Activated T-helper 1 cell treated with anti-CD3 and anti-CD28 coated beads, Interleukin-12 subunit alpha, Interleukin-12 subunit beta, Interleukin-2, Interleukin-4 antibody, amounts not matched to agents 30 ng/mL and 10 ng/mL and 1 ng/mL, durations not matched to agents 14 hours and 24 hours and 36 hours (primary cell): ENCODE measurements at regions of chr10 and their contacts with region 1.

Region 1: GRCh38 chr10:3467052-3467951 is 294.7 kb upstream of the PITRM1 start:
- DNase-seq: no peak
- H3K4me3 Mint-ChIP-seq: peak overlapping the region; percentile 62
- H3K27ac Mint-ChIP-seq: peak overlapping the region; percentile 90
- H3K4me1 Mint-ChIP-seq: peaks cover 53% of the 10 kb centered on the region
- H3K27me3 Mint-ChIP-seq: no peaks in the 10 kb centered on the region

Region 2: GRCh38 chr10:3197348-3198003 is 269.8 kb before region 1 on chr10:
- intact Hi-C with region 1: loop called (anchors 2 kb)
- DNase-seq: peak; percentile 76
- H3K4me3 Mint-ChIP-seq: peak overlapping the region; percentile 37
- H3K27ac Mint-ChIP-seq: peak overlapping the region; percentile 57
- H3K4me1 Mint-ChIP-seq: peaks cover 24% of the 10 kb centered on the region
- H3K27me3 Mint-ChIP-seq: peaks cover 82% of the 10 kb centered on the region

Region 3: GRCh38 chr10:3419502-3420495 is 47.5 kb before region 1 on chr10:
- intact Hi-C with region 1: loop called (anchors 2 kb)
- DNase-seq: peak; percentile 14
- H3K4me3 Mint-ChIP-seq: peak overlapping the region; percentile 47
- H3K27ac Mint-ChIP-seq: peak overlapping the region; percentile 48
- H3K4me1 Mint-ChIP-seq: peaks cover 40% of the 10 kb centered on the region
- H3K27me3 Mint-ChIP-seq: peaks cover 18% of the 10 kb centered on the region

Region 4: DNA sequence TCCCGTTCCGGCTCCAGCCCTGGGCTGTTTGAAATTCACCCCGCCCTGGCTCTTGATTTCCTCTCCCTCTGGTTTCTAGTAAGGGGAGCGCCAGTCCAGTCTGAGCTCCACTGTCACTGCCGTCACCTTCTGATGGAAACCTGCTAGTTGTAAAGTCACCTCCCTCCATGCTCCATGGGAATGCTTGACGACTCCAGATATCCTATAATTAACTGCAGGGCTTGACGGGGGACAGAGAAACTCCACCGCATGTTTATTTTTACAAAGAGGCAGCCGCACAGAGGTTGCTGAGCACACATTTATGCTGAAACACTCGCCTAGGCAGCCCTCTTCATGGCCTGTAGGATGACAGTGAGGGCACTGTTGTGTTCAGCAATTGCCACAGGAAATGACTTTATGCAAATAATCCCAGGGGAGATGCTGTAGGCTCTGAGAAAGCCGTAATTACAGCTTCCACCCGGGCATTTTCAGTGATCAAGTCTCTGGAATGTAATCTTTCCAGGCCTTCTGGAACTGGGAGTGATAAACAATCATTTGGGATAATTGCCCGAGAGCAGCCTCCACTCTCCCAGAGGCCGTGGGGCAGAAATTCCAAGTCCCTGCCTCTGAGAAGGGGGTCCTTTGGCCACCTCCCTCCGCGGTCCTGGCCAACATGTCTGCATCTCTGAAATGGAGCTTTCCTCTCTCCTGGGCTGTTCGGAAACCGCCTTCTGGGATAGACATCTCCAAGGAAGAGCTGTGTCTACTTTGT is 17.2 kb after region 1 on chr10:
- intact Hi-C with region 1: no loop called
- DNase-seq: no peak
- H3K4me3 Mint-ChIP-seq: no peak overlapping the region
- H3K27ac Mint-ChIP-seq: no peak overlapping the region
- H3K4me1 Mint-ChIP-seq: peaks cover 25% of the 10 kb centered on the region
- H3K27me3 Mint-ChIP-seq: peaks cover 5% of the 10 kb centered on the region

Region 5: DNA sequence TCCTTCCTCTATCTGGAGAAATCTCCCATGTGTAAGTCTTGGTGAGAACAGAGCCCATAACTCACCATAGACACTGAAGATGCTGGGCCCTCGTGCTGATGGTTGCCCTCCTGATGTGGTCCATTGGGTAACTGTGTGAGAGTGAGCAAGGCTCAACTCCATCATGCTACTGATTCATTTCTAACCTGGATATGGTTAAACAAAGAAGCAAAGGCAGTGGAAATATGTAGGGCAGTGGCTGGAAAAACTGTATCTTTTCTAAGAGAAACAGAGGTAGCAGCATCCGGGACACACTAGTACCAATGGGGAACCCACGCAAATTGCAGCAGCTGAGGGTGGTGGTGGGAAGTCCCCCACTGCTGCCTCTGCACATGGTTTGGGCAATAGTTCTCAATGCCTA is 96.0 kb after region 1 on chr10:
- intact Hi-C with region 1: loop called (anchors 5 kb)
- DNase-seq: no peak
- H3K4me3 Mint-ChIP-seq: no peak overlapping the region
- H3K27ac Mint-ChIP-seq: peak overlapping the region; percentile 49
- H3K4me1 Mint-ChIP-seq: peaks cover 28% of the 10 kb centered on the region
- H3K27me3 Mint-ChIP-seq: peaks cover 7% of the 10 kb centered on the region

Region 6: GRCh38 chr10:3791974-3792633 is 324.8 kb after region 1 on chr10:
- intact Hi-C with region 1: no loop called
- DNase-seq: no peak
- H3K4me3 Mint-ChIP-seq: no peak overlapping the region
- H3K27ac Mint-ChIP-seq: peak overlapping the region; percentile 23
- H3K4me1 Mint-ChIP-seq: peaks cover 23% of the 10 kb centered on the region
- H3K27me3 Mint-ChIP-seq: no peaks in the 10 kb centered on the region

Region 7: DNA sequence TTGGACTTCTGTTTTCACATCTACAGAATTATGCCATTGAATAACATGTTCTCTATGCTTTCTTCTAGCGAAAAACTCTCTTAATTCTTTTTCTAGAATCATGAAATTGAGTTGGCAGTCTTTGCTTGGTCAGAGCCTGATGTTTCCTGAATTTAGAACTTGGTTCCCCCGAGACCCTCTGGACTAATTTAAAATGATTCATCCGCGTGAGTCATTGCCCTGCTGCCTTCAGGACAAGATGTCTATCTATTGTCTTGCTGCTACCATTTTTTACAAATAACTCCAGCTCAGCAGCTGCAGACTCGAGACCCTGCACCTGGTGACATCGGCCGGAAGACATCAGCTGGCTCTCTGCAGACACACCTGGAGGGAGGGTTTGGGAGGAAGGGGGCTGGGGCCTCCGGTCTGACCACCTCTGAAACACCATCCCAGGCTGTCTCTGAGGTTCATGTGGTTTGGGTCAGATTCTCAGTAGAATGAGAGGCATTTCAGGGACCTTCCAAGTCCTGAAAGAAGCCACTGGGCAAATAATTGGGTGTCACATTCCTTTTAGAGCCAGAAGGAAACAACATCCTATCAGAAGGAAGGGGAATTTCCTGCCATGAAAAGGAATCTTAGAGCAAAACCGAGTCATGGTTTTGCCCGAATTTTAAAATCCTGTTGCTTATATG is 338.6 kb after region 1 on chr10:
- intact Hi-C with region 1: loop called (anchors 2 kb)
- DNase-seq: no peak
- H3K4me3 Mint-ChIP-seq: peak overlapping the region; percentile 70
- H3K27ac Mint-ChIP-seq: peak overlapping the region; percentile 99
- H3K4me1 Mint-ChIP-seq: peaks cover 76% of the 10 kb centered on the region
- H3K27me3 Mint-ChIP-seq: no peaks in the 10 kb centered on the region